ENCODE measurements at regions of chr3 and their contacts with region 1.

Region 1: GRCh38 chr3:118736107-118736506 is 298.5 kb downstream of the IGSF11 start:
- DNase-seq: no peak
- H3K4me3 ChIP-seq: no peak overlapping the region
- H3K27ac ChIP-seq: no peak overlapping the region
- H3K4me1 ChIP-seq: no peaks in the 10 kb centered on the region
- H3K27me3 ChIP-seq: no peaks in the 10 kb centered on the region
- CTCF ChIP-seq: no peak
- POLR2A ChIP-seq: no peak

Region 2: GRCh38 chr3:118760585-118761290 is 24.6 kb after region 1 on chr3:
- intact Hi-C with region 1: no loop called
- DNase-seq: no peak
- H3K4me3 ChIP-seq: no peak overlapping the region
- H3K27ac ChIP-seq: no peak overlapping the region
- H3K4me1 ChIP-seq: no peaks in the 10 kb centered on the region
- H3K27me3 ChIP-seq: no peaks in the 10 kb centered on the region
- CTCF ChIP-seq: no peak
- POLR2A ChIP-seq: no peak

Region 3: GRCh38 chr3:119063471-119063870 is 327.4 kb after region 1 on chr3:
- intact Hi-C with region 1: loop called (anchors 5 kb)
- DNase-seq: no peak
- H3K4me3 ChIP-seq: no peak overlapping the region
- H3K27ac ChIP-seq: no peak overlapping the region
- H3K4me1 ChIP-seq: no peaks in the 10 kb centered on the region
- H3K27me3 ChIP-seq: no peaks in the 10 kb centered on the region
- CTCF ChIP-seq: no peak
- POLR2A ChIP-seq: no peak

Measured in breast epithelium (tissue), 4 donors.